HAP-1 (cell line): ENCODE measurements at regions of chr14 and their contacts with region 1.

Region 1: GRCh38 chr14:34678306-34678705 is 36.1 kb downstream of the CFL2 start:
- DNase-seq: no peak
- H3K4me3 ChIP-seq: no peak overlapping the region
- H3K4me1 ChIP-seq: peaks cover 23% of the 10 kb centered on the region
- H3K27me3 ChIP-seq: no peaks in the 10 kb centered on the region

Region 2: DNA sequence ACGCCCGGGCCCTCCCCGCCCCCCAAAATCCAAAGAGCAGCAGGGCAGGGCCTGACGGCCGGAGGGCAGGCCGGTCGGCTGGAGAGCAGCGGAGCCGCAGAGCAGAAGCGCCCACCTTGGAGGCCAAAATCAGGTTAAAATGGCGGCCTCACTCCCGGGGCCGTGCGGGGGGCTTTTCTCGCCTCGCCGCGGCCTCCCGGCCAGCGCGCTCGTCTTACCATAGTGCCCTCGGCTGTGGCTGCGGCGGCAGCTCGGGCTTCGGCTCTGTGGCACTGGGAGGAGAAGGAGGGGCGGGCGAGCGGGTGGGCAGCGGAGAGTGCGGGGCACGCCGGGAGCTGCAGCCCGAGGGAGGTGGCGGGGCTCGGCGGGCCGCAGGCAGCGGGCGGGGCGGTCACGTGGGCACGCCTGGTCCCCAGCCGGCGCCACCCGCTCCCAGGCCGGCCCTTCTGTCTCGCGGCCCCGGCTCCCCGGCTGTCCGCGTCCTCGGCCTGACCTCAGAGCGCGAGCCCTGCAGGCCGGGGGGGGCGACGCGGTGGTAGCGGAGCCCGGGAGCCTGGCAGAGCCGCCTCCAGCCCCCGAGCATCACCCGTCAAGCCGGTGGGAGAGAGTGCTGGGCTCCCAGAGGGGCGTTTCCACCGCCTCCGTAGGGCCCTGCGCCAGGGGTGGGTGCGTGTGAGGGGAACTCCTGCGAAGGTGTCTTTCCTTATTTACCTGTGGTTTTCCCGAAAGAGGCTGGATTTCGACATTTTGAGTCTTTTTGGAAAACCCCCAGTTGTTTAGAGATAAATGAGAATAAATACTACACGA is 36.2 kb after region 1 on chr14 and contains the start of gene CFL2:
- in situ Hi-C with region 1: loop called (anchors 5 kb)
- DNase-seq: peak; percentile 83 to 89
- H3K4me3 ChIP-seq: peak within 1 kb of the TSS; percentile 80
- H3K4me1 ChIP-seq: peaks cover 26% of the 10 kb centered on the region
- H3K27me3 ChIP-seq: no peaks in the 10 kb centered on the region

Region 3: GRCh38 chr14:35050652-35051051 is 372.3 kb after region 1 on chr14:
- in situ Hi-C with region 1: no loop called
- DNase-seq: no peak
- H3K4me3 ChIP-seq: no peak overlapping the region
- H3K4me1 ChIP-seq: peaks cover 7% of the 10 kb centered on the region
- H3K27me3 ChIP-seq: no peaks in the 10 kb centered on the region